ENCODE measurements at regions of chr11 and their contacts with region 1.

Region 1: DNA sequence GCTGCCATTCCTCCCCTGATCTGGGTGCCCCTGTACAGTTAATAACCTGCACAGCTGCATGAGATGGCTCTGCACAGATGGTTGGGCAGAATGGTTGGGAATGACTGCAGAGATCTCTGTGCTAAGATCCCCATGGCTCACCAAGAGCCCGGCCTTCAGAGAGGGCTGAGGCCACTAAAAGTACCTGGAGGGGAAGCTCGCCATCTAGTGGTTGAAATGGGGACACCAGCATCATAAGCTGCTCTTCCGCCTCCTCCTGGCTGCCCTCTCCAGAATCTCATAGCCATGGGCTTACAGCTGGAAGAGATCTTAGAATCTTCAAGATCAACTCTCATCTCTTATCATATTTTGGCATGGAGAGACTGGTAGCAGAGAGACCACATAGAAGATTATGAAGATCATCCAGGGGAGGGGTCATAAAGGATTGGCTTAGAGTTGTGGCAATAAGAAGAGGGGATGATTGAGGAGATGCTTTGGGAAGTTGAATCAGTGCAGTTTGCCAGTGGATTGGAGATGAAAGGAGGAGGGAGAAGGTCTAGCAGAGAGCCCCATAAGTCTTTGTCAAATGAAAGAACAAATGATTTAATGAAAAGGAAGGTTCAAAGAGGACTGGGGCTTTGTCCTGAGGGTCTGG is 22.0 kb upstream of the TLCD5 start:
- H3K4me3 ChIP-seq: no peak overlapping the region
- H3K27ac ChIP-seq: no peak overlapping the region
- H3K4me1 ChIP-seq: no peaks in the 10 kb centered on the region
- CTCF ChIP-seq: no peak

Region 2: GRCh38 chr11:120137611-120138521 is 165.3 kb before region 1 on chr11 and contains the start of gene TRIM29:
- CTCF ChIA-PET with region 1: no interaction called
- POLR2A ChIA-PET with region 1: no interaction called
- H3K4me3 ChIP-seq: no peak within 1 kb of the TSS
- H3K27ac ChIP-seq: no peak within 1 kb of the TSS
- H3K4me1 ChIP-seq: no peaks in the 10 kb centered on the region
- CTCF ChIP-seq: no peak

Region 3: DNA sequence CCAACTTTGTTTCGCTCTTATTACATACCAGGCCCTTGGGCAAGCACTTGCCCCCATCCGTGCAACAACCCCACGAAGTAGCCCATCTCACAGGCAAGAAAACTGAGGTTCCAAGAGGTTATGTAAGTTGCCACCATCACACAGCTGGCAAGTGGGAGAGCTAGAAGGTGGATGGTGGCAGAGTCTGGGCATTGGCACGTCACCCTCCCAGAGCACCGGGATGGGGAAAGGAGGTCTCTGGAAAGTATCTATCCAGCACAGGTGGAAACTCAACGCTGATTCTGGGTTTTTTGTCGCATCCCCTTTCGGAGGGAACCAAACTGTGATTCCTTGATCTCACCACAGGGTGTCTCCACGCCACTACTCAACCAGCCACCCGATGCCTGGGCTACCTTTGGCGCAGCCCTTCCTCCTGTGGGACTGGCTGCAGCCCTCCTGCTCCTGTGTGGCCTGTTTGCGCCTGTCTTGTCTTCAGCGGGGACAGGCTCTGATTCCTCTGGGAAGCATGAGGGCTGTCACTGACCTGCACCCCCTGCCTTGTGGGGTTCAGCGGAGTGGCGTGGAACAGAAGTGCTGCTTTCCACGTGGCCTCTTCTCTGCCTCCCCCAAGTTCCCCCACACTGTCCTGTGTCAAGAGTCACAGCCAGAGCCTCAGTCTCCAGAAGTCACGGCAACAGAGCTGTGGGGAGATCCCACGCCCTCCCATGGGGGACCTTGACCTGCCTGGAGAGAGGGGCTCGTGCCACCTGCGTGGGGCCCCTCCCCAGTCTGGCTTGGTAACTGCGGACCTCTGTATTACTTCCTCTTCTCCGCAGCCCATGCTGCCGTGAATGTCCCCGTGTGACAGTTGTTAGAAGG is 130.8 kb before region 1 on chr11:
- CTCF ChIA-PET with region 1: interaction called, 44 read pairs
- POLR2A ChIA-PET with region 1: no interaction called
- H3K4me3 ChIP-seq: no peak overlapping the region
- H3K27ac ChIP-seq: no peak overlapping the region
- H3K4me1 ChIP-seq: no peaks in the 10 kb centered on the region
- CTCF ChIP-seq: peak; percentile 65

Region 4: GRCh38 chr11:120235024-120235861 is 67.9 kb before region 1 on chr11:
- CTCF ChIA-PET with region 1: interaction called, 349 read pairs
- POLR2A ChIA-PET with region 1: no interaction called
- H3K4me3 ChIP-seq: no peak overlapping the region
- H3K27ac ChIP-seq: no peak overlapping the region
- H3K4me1 ChIP-seq: no peaks in the 10 kb centered on the region
- CTCF ChIP-seq: peak; percentile 75

Region 5: GRCh38 chr11:120248551-120249278 is 54.4 kb before region 1 on chr11:
- CTCF ChIA-PET with region 1: interaction called, 26 read pairs
- POLR2A ChIA-PET with region 1: no interaction called
- H3K4me3 ChIP-seq: no peak overlapping the region
- H3K27ac ChIP-seq: no peak overlapping the region
- H3K4me1 ChIP-seq: no peaks in the 10 kb centered on the region
- CTCF ChIP-seq: no peak

Region 6: GRCh38 chr11:120268686-120269085 is 34.4 kb before region 1 on chr11:
- CTCF ChIA-PET with region 1: interaction called, 10 read pairs
- POLR2A ChIA-PET with region 1: no interaction called
- H3K4me3 ChIP-seq: no peak overlapping the region
- H3K27ac ChIP-seq: no peak overlapping the region
- H3K4me1 ChIP-seq: no peaks in the 10 kb centered on the region
- CTCF ChIP-seq: no peak

Region 7: DNA sequence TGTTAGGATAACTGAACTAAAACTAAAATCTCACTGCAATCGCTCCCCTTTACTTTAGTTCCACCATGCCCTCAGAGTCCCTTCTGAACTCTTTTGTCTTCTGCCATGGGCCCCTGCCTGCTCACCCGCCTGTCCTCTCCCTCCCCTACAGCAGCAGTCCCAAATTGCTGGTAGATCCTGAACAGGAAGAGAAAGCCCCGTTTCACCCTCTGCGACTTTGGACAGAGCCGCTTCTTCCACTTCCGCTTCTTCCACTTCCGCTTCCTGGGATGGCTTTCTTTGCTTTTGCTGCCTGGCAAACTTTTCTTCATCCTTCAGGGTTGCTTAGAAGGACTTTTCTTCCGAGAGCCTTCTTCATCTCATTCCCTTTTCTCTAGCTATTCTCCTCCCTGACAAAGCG is 13.7 kb before region 1 on chr11:
- CTCF ChIA-PET with region 1: interaction called, 29 read pairs
- POLR2A ChIA-PET with region 1: no interaction called
- H3K4me3 ChIP-seq: no peak overlapping the region
- H3K27ac ChIP-seq: no peak overlapping the region
- H3K4me1 ChIP-seq: no peaks in the 10 kb centered on the region
- CTCF ChIP-seq: no peak

Region 8: GRCh38 chr11:120316842-120317688 is 13.9 kb after region 1 on chr11:
- CTCF ChIA-PET with region 1: interaction called, 15 read pairs
- POLR2A ChIA-PET with region 1: no interaction called
- H3K4me3 ChIP-seq: no peak overlapping the region
- H3K27ac ChIP-seq: no peak overlapping the region
- H3K4me1 ChIP-seq: no peaks in the 10 kb centered on the region
- CTCF ChIP-seq: no peak

Region 9: DNA sequence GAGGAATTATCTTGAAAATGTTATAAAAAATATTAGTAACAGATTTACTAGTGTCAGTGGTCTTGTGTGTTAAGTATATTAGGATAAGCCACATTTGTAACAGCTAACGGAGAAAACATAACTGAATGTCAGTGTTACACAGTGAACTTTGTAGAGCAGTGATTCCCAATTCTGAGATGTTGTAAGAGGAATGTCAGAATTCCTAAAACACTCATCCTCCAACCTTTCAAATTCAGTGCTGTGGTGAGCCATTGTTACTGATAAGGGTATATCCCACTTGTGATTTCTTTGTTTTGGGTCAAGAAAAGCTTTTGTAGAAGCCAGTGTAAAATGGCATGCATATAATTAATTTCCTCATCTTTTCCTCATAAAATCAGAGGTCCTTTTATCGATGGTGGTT is 95.0 kb after region 1 on chr11:
- CTCF ChIA-PET with region 1: no interaction called
- POLR2A ChIA-PET with region 1: no interaction called
- H3K4me3 ChIP-seq: no peak overlapping the region
- H3K27ac ChIP-seq: no peak overlapping the region
- H3K4me1 ChIP-seq: peaks cover 10% of the 10 kb centered on the region; the same call in 1 of the 2 replicates
- CTCF ChIP-seq: no peak

Region 10: GRCh38 chr11:121207485-121208115 is 904.5 kb after region 1 on chr11:
- CTCF ChIA-PET with region 1: no interaction called
- POLR2A ChIA-PET with region 1: no interaction called
- H3K4me3 ChIP-seq: no peak overlapping the region
- H3K27ac ChIP-seq: no peak overlapping the region
- H3K4me1 ChIP-seq: no peaks in the 10 kb centered on the region
- CTCF ChIP-seq: no peak